Activated CD4-positive, alpha-beta T cell treated with anti-CD3 and anti-CD28 coated beads for 36 hours (primary cell): ENCODE measurements at regions of chr17 and their contacts with region 1.

Region 1: DNA sequence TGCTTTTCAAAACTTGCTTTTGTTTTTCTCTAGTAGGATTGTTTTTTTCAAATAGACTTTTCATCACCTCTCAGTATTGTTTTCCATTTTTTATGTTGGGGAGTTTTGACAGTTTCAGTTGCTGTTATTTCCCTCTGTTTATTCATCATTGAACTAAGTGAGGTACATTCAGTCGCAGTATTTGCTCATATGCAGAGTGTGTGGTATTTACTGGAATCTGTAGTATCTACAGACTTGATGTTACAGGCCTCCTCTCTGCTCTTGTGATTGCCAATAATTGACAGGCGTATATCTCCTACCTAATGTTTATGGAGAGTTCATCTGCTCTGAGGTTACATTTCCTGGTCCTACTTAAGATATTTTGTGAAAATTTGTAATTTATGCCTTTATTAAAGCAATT is 49.6 kb downstream of the COX10 start:
- DNase-seq: peak; percentile 17
- ATAC-seq: peak; percentile 84
- H3K4me3 Mint-ChIP-seq: no peak overlapping the region
- H3K27ac Mint-ChIP-seq: peak overlapping the region; percentile 92
- H3K4me1 Mint-ChIP-seq: peaks cover 89% of the 10 kb centered on the region
- H3K27me3 Mint-ChIP-seq: no peaks in the 10 kb centered on the region

Region 2: GRCh38 chr17:13813347-13814240 is 305.4 kb before region 1 on chr17:
- CTCF ChIA-PET with region 1: no interaction called
- POLR2A ChIA-PET with region 1: no interaction called
- intact Hi-C with region 1: no loop called
- DNase-seq: no peak
- ATAC-seq: no peak
- H3K4me3 Mint-ChIP-seq: no peak overlapping the region
- H3K27ac Mint-ChIP-seq: no peak overlapping the region
- H3K4me1 Mint-ChIP-seq: peaks cover 3% of the 10 kb centered on the region
- H3K27me3 Mint-ChIP-seq: no peaks in the 10 kb centered on the region

Region 3: GRCh38 chr17:14069251-14070021 is 49.5 kb before region 1 on chr17 and contains the start of gene COX10:
- CTCF ChIA-PET with region 1: no interaction called
- POLR2A ChIA-PET with region 1: no interaction called
- intact Hi-C with region 1: loop called (anchors 1 to 2 kb)
- DNase-seq: peak; percentile 91
- ATAC-seq: peak; percentile 93
- H3K4me3 Mint-ChIP-seq: peak within 1 kb of the TSS; percentile 94
- H3K27ac Mint-ChIP-seq: peak within 1 kb of the TSS; percentile 94
- H3K4me1 Mint-ChIP-seq: peaks cover 54% of the 10 kb centered on the region
- H3K27me3 Mint-ChIP-seq: no peaks in the 10 kb centered on the region
- total RNA-seq, gene COX10: 22.0 to 32.5 TPM

Region 4: GRCh38 chr17:14107889-14108288 is 11.1 kb before region 1 on chr17:
- CTCF ChIA-PET with region 1: no interaction called
- POLR2A ChIA-PET with region 1: no interaction called
- intact Hi-C with region 1: loop called in 1 of 2 experiments (anchors 1 kb)
- DNase-seq: no peak
- ATAC-seq: peak; percentile 83
- H3K4me3 Mint-ChIP-seq: no peak overlapping the region
- H3K27ac Mint-ChIP-seq: peak overlapping the region; percentile 21
- H3K4me1 Mint-ChIP-seq: peaks cover 44% of the 10 kb centered on the region
- H3K27me3 Mint-ChIP-seq: no peaks in the 10 kb centered on the region

Region 5: GRCh38 chr17:14196377-14196997 is 77.5 kb after region 1 on chr17:
- CTCF ChIA-PET with region 1: interaction called, 3 read pairs
- POLR2A ChIA-PET with region 1: no interaction called
- intact Hi-C with region 1: loop called (anchors 2 to 5 kb)
- DNase-seq: no peak
- ATAC-seq: peak; percentile 19
- H3K4me3 Mint-ChIP-seq: no peak overlapping the region
- H3K27ac Mint-ChIP-seq: peak overlapping the region; percentile 68
- H3K4me1 Mint-ChIP-seq: peaks cover 85% of the 10 kb centered on the region
- H3K27me3 Mint-ChIP-seq: no peaks in the 10 kb centered on the region

Region 6: GRCh38 chr17:14203388-14203787 is 84.4 kb after region 1 on chr17:
- CTCF ChIA-PET with region 1: interaction called, 3 read pairs
- POLR2A ChIA-PET with region 1: interaction called, 4 read pairs
- intact Hi-C with region 1: loop called (anchors 2 to 5 kb)
- DNase-seq: peak; percentile 60
- ATAC-seq: peak; percentile 55
- H3K4me3 Mint-ChIP-seq: no peak overlapping the region
- H3K27ac Mint-ChIP-seq: peak overlapping the region; percentile 71
- H3K4me1 Mint-ChIP-seq: peaks cover 83% of the 10 kb centered on the region
- H3K27me3 Mint-ChIP-seq: no peaks in the 10 kb centered on the region